Dorsolateral prefrontal cortex (tissue), 120 donors: ENCODE measurements at regions of chr7 and their contacts with region 1.

Region 1: DNA sequence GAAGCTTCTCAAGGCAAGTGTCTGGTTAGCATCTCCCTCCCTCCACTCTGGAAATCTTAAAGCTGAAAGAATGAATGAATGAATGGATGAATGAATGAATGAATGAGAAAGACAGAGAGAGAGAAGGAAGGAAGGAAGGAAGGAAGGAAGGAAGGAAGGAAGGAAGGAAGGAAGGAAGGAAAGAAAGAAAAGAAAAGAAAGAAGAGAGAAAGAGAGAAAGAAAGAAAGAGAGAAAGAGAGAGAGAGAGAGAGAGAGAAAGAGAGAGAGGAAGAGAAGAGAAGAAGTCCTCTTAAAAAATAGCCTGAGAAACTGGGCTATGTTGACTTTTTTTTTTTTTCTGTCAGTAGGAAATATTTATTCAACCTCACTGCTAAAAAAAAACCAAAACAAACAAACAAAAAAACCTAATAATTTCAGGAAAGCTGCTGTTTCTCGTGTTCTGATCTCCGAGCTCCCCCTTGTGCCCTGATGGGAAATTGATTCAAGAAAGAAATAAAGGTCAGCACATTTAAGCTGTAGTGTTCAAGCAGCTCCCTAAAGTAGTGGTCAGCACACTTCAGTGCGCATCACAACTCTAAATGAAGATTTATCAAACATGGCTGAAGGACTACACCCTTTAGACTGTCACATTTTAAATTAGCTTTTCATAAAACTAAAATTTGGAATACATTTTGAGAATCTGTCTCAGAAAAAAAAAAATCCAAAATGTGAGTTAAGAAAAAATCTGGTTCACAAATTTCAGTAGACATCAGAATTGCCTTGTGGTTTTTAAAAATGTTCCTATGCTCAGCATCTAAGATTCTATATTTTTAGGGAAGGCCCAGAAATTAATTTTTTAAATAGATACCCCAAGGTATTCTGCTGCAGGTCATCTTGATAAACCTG is 154.3 kb downstream of the ELAPOR2 start:
- DNase-seq: peak in 1 of 10 donors; percentile 12
- H3K4me3 ChIP-seq: no peak overlapping the region
- H3K27ac ChIP-seq: no peak overlapping the region
- H3K27me3 ChIP-seq: no peaks in the 10 kb centered on the region
- CTCF ChIP-seq: peak in 55 of 56 donors; percentile 46 to 84 (median 70)

Region 2: DNA sequence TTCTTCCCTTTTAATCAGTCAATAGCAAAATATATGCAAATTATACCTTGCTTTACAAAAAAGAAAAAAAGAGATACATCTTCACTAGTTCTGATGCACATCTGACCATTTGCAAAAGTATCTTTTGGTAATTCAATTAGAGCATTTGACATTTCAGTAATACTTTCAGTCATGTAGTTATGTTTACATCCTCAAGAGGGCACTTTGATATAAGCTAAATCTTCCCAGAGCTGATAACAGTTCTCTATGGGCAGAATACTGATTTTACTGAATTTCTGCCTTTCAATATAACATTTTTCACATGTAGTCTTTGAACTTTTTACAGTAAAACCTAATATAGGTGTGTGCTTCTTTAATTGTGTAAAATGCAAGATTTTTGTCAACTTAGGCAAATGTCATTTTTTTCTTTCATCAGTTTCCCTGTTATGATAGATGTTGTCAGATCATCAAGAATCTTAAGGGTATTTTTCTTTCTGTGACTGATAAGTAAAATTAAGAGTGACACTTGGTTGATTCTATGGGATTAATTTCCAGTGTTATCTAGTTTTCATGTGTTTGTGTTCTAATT is 1014.9 kb before region 1 on chr7:
- intact Hi-C with region 1: loop called (anchors 5 kb)
- DNase-seq: no peak
- H3K4me3 ChIP-seq: no peak overlapping the region
- H3K27ac ChIP-seq: no peak overlapping the region
- H3K27me3 ChIP-seq: no peaks in the 10 kb centered on the region
- CTCF ChIP-seq: peak; percentile 28 to 84 (median 73)

Region 3: GRCh38 chr7:86600506-86601290 is 304.5 kb before region 1 on chr7:
- intact Hi-C with region 1: loop called in 1 of 2 experiments (anchors 2 kb)
- DNase-seq: peak; percentile 13 to 88 (median 82)
- H3K4me3 ChIP-seq: no peak overlapping the region
- H3K27ac ChIP-seq: peak overlapping the region in 27 of 59 donors; percentile 1 to 69 (median 40)
- H3K27me3 ChIP-seq: no peaks in the 10 kb centered on the region
- CTCF ChIP-seq: peak in 54 of 56 donors; percentile 31 to 81 (median 58)

Region 4: GRCh38 chr7:88146616-88147015 is 1241.4 kb after region 1 on chr7:
- intact Hi-C with region 1: no loop called
- DNase-seq: peak in 3 of 10 donors; percentile 11 to 61 (median 26)
- H3K4me3 ChIP-seq: no peak overlapping the region
- H3K27ac ChIP-seq: peak overlapping the region in 4 of 59 donors; percentile 10 to 58 (median 14)
- H3K27me3 ChIP-seq: no peaks in the 10 kb centered on the region
- CTCF ChIP-seq: no peak